ENCODE measurements at regions of chr2 and their contacts with region 1.

Region 1: GRCh38 chr2:197453161-197453914 is at the start of gene COQ10B:
- DNase-seq: peak; percentile 100
- ATAC-seq: peak; percentile 99
- total RNA-seq, gene COQ10B: 20.5 TPM

Region 2: DNA sequence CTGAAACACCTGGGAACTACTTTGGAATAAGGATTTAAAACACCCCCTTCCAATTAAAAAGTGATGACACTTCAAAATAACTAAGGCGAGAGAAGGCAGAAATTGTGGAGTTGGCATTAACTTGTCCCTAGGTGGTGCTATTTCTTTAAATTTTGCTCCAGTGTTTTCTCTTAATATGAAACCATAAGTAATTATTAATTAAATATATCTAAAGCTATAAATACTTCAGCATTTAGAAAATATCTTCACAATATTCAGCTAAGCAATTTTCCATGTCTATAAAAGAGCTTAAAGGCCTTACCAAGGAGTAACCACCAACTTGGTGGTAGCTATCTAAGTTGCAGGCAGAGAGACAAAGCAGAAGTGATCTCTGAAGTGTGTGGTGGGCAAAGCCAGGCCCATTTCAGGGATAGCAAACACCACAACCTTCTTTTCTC is 340.0 kb before region 1 on chr2:
- intact Hi-C with region 1: no loop called
- DNase-seq: no peak
- ATAC-seq: no peak

Region 3: DNA sequence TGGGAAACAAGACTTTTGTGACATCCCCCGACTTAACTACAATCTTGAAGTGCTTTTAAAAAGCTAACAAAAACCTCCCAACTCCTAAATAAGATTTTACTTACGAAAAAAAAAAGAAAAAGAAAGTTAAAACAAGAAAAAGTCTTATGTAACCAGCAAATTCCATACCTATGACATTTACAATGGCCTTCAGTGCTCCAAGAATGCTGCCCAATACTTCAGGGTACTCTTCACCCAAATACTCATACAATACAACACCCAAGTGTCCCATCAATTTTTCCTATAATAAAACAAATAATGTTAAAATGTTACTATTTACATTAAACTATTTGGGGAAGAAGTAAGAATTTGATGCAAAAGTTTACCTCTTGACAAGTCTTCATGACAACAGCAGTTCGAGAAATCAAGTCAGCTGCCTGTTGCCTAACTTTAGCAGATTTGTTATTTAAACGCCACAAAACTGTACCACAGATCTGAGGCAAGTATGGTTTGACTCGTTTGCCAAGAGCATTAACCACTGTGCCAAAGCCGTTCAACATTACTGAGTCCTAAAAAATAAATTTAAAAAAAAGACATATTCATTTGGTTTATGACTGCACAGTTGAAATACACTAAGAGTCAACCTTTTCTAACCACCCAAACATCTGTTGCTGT is 53.3 kb before region 1 on chr2:
- intact Hi-C with region 1: no loop called
- DNase-seq: no peak
- ATAC-seq: no peak

Region 4: DNA sequence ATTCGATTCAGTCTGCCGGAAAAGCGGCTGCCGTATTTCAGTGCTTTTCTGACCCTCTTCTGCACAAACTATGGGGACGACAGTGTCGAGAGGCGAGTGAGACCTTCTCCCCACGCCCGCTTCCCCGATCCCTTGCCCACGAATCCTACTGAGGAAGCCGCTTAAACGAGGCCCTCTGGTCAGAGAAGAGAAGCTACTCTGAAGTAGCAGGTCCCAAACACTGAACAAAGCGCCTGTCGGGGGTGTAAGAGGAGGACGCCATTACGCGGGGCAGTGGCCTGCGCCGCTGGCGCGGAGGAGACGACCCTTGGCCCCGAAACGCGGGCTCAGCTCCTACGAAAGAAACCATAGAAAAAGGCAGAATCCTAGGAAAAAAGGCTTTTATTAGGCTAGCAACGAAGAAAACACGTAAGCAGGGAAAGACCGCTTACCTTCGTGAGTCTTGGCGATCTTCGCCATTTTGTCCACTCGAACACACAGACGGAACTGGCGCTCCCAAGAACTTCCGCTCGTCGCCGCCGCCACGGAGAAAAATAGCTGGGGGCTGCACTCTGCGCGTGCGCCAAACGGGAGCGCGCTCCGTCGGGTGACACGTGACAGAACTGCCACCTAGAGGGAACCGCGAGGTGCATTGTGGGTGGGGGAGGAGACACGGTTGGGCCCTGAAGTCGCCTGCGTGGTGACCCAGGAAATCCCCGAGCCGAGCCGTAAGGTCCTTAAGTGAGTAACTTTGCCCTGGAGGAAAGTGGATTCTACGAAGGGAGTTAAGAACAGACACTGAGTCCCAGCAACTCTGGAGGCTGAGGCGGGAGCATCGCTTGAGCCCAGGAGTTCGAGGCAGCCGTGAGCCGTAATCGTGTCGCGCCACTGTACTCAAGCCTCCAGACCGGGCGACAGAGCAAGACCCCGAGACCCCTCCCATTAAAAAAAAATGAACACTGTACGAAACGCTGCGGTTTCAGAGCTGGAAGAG is 18.5 kb before region 1 on chr2 and contains the start of gene SF3B1:
- intact Hi-C with region 1: loop called (anchors 1 kb)
- DNase-seq: peak; percentile 99
- ATAC-seq: peak; percentile 99
- total RNA-seq, gene SF3B1: 126 TPM

Region 5: DNA sequence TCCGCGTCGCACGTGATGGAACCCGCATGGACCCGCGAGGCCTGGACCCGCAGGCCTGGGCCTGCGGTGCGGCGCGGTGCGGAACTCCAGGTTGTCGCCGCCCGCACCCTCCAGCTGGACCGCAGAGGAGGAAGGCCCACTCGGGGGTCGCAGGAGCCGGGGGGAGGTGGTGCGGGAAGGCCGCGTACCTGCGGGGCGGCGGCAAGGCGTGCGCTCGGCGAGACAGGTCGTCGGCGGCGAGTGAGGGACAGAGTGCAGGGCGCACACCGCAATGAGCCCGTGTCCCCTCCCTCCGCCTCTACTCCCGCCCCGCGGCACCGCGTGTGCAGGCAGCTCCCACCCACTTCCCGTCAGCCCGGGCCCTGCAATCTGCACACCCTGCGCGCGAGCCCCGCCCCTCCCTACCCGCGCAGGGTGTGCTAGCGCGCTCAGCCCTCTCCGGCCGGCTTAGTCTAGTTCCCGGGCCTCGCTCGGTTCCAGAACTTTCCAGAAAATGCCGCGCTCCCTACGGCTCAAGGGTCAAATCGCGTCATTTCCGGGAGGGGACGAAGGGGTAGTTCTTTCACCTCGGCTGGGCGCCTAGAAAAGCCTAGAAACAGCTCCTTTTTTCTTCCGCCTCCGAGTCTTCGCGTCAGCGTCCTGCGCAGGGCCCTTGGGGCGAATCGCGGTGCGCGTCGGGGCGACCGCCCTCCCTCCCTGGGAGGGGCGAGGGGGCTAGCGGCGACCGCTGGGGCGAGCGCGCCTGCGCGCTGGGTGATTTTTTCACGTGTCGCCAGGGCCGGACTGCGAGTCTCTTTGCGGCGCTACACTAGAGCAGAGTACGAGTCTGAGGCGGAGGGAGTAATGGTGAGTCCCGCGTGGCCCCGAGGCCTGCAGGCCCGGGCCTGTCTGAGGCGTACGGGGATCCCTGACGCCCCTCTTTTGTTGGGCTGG is 46.5 kb after region 1 on chr2 and contains the starts of genes HSPD1 and HSPE1:
- intact Hi-C with region 1: loop called (anchors 2 kb)
- DNase-seq: peak; percentile 98
- ATAC-seq: peak; percentile 98
- total RNA-seq, gene HSPD1: 145 TPM
- total RNA-seq, gene HSPE1: 105 TPM